Activated CD4-positive, alpha-beta T cell treated with anti-CD3 and anti-CD28 coated beads for 36 hours (primary cell): ENCODE measurements at regions of chr2 and their contacts with region 1.

Region 1: GRCh38 chr2:48356701-48357325 is 173.1 kb upstream of the STON1 start:
- DNase-seq: peak; percentile 52
- ATAC-seq: peak; percentile 96
- H3K4me3 Mint-ChIP-seq: peak overlapping the region; percentile 55
- H3K27ac Mint-ChIP-seq: peak overlapping the region; percentile 96
- H3K4me1 Mint-ChIP-seq: peaks cover 65% of the 10 kb centered on the region
- H3K27me3 Mint-ChIP-seq: no peaks in the 10 kb centered on the region

Region 2: DNA sequence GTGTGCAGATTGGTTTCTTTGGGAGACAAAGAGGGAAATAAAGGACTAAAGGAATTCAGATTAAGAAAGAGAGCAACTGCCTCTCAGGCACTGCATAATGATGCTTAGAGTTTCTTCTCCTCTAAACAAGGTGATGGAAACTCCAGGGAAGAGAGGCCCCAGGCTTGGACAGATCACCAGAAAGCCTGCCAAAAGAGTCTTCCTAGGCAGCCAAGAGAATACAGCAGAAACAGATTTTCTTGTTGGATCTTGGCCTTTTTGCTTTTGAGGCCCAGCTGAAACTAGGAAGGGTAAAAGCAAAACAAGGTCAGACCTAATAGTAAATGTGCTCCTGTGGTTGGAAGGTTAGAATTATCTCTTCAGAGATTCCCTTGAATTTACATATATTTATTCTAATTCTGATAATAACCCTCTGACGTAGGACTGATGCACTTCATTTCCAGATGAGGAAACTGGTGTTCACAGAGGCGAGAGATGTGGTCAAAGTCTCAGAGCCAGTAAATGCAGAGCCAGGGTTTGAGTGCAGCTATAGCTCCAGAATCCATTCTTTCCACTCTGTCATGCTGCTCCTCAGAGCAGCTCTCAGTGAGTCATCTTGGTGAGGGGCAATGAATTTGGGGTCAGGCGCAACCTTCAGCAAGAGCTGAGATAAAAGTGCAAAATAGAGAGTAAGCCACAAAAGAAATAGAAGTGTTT is 308.2 kb before region 1 on chr2:
- CTCF ChIA-PET with region 1: no interaction called
- POLR2A ChIA-PET with region 1: no interaction called
- intact Hi-C with region 1: no loop called
- DNase-seq: no peak
- ATAC-seq: no peak
- H3K4me3 Mint-ChIP-seq: no peak overlapping the region
- H3K27ac Mint-ChIP-seq: no peak overlapping the region
- H3K4me1 Mint-ChIP-seq: no peaks in the 10 kb centered on the region
- H3K27me3 Mint-ChIP-seq: peaks cover 5% of the 10 kb centered on the region

Region 3: GRCh38 chr2:48343571-48344440 is 13.0 kb before region 1 on chr2:
- CTCF ChIA-PET with region 1: interaction called, 3 read pairs
- POLR2A ChIA-PET with region 1: no interaction called
- intact Hi-C with region 1: loop called (anchors 1 kb)
- DNase-seq: no peak
- ATAC-seq: peak; percentile 95
- H3K4me3 Mint-ChIP-seq: peak overlapping the region; percentile 40
- H3K27ac Mint-ChIP-seq: peak overlapping the region; percentile 78
- H3K4me1 Mint-ChIP-seq: peaks cover 50% of the 10 kb centered on the region
- H3K27me3 Mint-ChIP-seq: no peaks in the 10 kb centered on the region

Region 4: GRCh38 chr2:48377646-48378045 is 20.8 kb after region 1 on chr2:
- CTCF ChIA-PET with region 1: no interaction called
- POLR2A ChIA-PET with region 1: no interaction called
- intact Hi-C with region 1: no loop called
- DNase-seq: no peak
- ATAC-seq: no peak
- H3K4me3 Mint-ChIP-seq: no peak overlapping the region
- H3K27ac Mint-ChIP-seq: no peak overlapping the region
- H3K4me1 Mint-ChIP-seq: no peaks in the 10 kb centered on the region
- H3K27me3 Mint-ChIP-seq: no peaks in the 10 kb centered on the region

Region 5: DNA sequence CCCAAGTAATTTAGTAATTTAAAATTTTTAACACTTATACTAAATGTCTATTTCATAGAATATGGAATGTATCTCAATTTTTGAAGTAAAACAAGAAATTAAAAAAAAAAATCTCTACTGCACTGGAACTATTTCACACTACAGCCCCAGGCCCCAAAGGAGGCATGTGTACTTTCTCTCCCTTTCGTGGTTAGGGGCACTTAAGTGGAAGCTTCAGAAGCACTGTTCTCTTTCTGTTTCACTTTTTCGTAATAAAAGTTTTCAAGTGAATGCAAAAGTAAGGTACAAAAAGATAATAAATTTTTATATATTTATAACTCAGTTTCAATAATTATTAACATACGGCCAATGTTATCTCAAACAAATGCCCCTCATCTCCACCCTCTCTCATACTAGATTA is 49.3 kb after region 1 on chr2:
- CTCF ChIA-PET with region 1: interaction called, 3 read pairs
- POLR2A ChIA-PET with region 1: no interaction called
- intact Hi-C with region 1: loop called in 1 of 2 experiments (anchors 5 kb)
- DNase-seq: no peak
- ATAC-seq: no peak
- H3K4me3 Mint-ChIP-seq: no peak overlapping the region
- H3K27ac Mint-ChIP-seq: no peak overlapping the region
- H3K4me1 Mint-ChIP-seq: peaks cover 8% of the 10 kb centered on the region
- H3K27me3 Mint-ChIP-seq: no peaks in the 10 kb centered on the region